Gastrocnemius medialis (tissue), 4 donors: ENCODE measurements at regions of chr1 and their contacts with region 1.

Region 1: DNA sequence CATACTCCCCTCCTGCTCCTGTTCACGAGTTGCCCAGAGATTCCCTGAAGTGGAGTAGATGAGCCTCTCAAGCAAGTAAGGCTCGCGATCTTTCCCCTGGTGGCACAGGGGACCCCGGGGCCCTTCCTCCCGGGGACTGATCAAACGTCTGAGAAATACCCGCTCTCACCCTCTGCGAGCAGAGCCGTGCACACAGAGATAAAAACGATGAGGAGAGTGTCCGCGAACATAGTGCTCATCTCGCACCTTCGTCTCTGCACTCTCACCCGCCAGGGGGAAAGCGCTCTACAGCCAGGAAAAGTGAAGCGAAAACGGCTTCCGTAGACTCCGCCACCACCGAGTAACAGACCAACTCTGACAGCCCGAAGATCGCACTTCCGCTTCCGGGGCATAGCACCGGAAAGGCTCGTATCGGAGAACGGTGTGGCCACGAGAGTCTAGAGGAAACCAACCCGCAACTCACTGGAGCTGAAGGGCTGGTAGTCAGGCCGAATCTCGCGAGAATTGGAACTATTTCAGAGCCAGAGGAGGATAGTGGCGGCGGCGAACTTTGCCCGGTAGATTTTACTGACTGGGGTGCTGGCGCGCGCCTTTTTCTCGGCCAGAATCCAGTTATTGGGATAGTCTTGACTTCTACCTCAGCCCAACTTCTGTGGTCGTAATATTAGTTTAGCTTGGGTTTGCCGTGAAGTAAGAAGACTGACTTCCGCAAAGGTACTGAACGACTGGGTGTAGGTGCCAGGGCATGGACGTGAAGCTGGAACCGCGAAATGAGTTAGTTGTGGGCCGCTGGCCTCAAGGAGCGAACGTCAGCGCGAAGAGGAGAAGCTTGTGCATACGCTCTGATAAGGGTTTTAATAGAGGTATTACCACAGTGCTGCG is at the start of gene TMCO1:
- DNase-seq: peak; percentile 96 to 97
- ATAC-seq: peak; percentile 100
- H3K4me3 ChIP-seq: peak within 1 kb of the TSS; percentile 60 to 95 (median 86)
- H3K27ac ChIP-seq: peak within 1 kb of the TSS; percentile 86 to 90 (median 86)
- H3K4me1 ChIP-seq: peaks cover 23 to 33% of the 10 kb centered on the region in 2 donors
- H3K27me3 ChIP-seq: no peaks in the 10 kb centered on the region
- CTCF ChIP-seq: peak; percentile 22 to 34 (median 33)
- POLR2A ChIP-seq: peak; percentile 57 to 68
- total RNA-seq, gene TMCO1: 28.7 to 46.9 (median 36.8) TPM

Region 2: DNA sequence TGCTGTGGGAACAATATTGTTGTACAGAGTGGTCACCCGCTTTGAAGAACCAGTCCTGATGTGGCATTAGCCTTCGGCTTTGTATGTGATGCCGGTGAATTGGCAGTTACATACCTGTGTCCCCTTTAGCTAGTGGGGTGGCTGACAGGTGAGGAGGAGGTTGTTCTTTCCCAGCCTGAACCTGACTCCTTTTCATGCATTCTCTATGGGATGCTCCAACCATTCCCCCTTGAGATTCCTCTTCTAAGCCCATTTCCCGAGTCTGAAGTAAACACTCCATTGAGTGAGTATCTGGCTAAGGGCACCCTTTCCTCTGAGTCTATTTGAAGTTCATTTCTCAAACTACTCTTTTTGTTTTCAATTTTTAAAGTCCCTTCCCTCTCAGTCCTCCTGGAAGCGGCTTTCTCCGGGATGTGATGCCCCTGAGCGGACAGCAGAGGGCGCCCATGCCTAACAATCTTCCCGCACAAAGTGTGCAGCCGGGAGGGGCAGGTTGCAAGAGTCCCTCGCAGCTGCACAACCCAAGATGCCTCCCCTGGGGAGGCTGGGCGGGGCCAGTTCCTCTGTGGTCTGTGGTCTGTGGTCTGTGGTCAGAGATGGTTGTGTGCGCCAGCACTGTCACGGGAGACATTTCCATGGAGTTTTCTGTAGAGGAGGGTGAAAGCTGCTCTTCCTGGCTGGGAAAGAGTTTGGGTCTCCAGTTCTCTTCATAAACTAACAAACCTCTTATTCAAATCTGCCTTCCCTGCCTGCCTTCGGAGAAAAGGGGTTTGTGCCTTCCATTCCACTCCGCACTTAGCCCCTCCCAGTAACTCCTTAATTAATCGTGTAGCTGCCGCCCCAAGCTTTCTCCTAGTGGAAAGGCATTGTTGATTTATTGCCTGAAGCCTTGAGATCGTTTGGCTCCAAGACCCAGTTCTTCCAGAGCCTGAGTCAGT is 375.9 kb before region 1 on chr1:
- in situ Hi-C with region 1: loop called in 1 of 4 experiments (anchors 25 kb)
- intact Hi-C with region 1: no loop called
- DNase-seq: peak; percentile 68 to 77
- ATAC-seq: peak; percentile 79 to 86
- H3K4me3 ChIP-seq: peak overlapping the region in 2 of 4 donors; percentile 8 to 17
- H3K27ac ChIP-seq: no peak overlapping the region
- H3K4me1 ChIP-seq: peaks cover 6 to 9% of the 10 kb centered on the region in 2 donors
- H3K27me3 ChIP-seq: no peaks in the 10 kb centered on the region
- CTCF ChIP-seq: peak; percentile 87 to 97 (median 91)
- POLR2A ChIP-seq: no peak

Region 3: GRCh38 chr1:165630629-165631341 is 138.0 kb before region 1 on chr1 and contains the start of gene MGST3:
- in situ Hi-C with region 1: loop called in 1 of 4 experiments (anchors 10 kb)
- intact Hi-C with region 1: loop called (anchors 2 kb)
- DNase-seq: peak; percentile 90 to 95
- ATAC-seq: peak; percentile 81
- H3K4me3 ChIP-seq: peak within 1 kb of the TSS; percentile 64 to 95 (median 76)
- H3K27ac ChIP-seq: peak within 1 kb of the TSS; percentile 91 to 100 (median 94)
- H3K4me1 ChIP-seq: peaks cover 39 to 42% of the 10 kb centered on the region in 2 donors
- H3K27me3 ChIP-seq: no peaks in the 10 kb centered on the region
- CTCF ChIP-seq: no peak
- POLR2A ChIP-seq: peak; percentile 96
- total RNA-seq, gene MGST3: 101 to 275 (median 202) TPM

Region 4: GRCh38 chr1:165697881-165698760 is 70.6 kb before region 1 on chr1 and contains the start of gene ALDH9A1:
- in situ Hi-C with region 1: no loop called
- intact Hi-C with region 1: loop called (anchors 1 kb)
- DNase-seq: peak; percentile 68 to 87
- ATAC-seq: peak; percentile 90 to 92
- H3K4me3 ChIP-seq: peak within 1 kb of the TSS; percentile 91 to 96 (median 94)
- H3K27ac ChIP-seq: peak within 1 kb of the TSS; percentile 97 to 98 (median 98)
- H3K4me1 ChIP-seq: peaks cover 18 to 27% of the 10 kb centered on the region in 2 donors
- H3K27me3 ChIP-seq: no peaks in the 10 kb centered on the region
- CTCF ChIP-seq: peak in 2 of 5 experiments; percentile 49 to 52
- POLR2A ChIP-seq: peak; percentile 75 to 90
- total RNA-seq, gene ALDH9A1: 46.4 to 91.5 (median 63.3) TPM

Region 5: DNA sequence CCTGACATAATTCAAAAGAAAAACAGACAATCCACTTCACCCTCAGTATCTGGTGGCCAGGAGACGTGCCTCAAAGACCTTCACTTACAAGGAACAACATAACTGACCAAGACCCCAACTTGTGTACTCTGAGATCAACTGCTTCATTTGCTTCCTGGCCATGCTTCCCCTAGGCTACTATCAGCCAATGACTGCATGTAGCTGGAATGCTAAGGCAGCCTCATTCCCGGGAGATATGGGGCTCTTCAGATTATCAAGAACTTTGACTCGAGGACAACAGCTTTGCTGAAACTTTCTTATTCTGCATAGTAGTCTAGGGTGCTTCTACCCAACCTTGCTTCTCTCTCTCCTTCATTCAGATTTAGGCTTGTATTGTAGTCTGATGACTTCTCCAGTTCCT is 47.0 kb after region 1 on chr1:
- in situ Hi-C with region 1: no loop called
- intact Hi-C with region 1: no loop called
- DNase-seq: no peak
- ATAC-seq: no peak
- H3K4me3 ChIP-seq: no peak overlapping the region
- H3K27ac ChIP-seq: no peak overlapping the region
- H3K4me1 ChIP-seq: no peaks in the 10 kb centered on the region
- H3K27me3 ChIP-seq: no peaks in the 10 kb centered on the region
- CTCF ChIP-seq: no peak
- POLR2A ChIP-seq: no peak

Region 6: GRCh38 chr1:165862448-165862847 is 93.7 kb after region 1 on chr1:
- in situ Hi-C with region 1: no loop called
- intact Hi-C with region 1: loop called (anchors 1 kb)
- DNase-seq: peak; percentile 57 to 71
- ATAC-seq: peak; percentile 84 to 87
- H3K4me3 ChIP-seq: no peak overlapping the region
- H3K27ac ChIP-seq: peak overlapping the region; percentile 61 to 79 (median 63)
- H3K4me1 ChIP-seq: peaks cover 37% of the 10 kb centered on the region in 2 donors
- H3K27me3 ChIP-seq: no peaks in the 10 kb centered on the region
- CTCF ChIP-seq: no peak
- POLR2A ChIP-seq: no peak